ENCODE measurements at regions of chr4 and their contacts with region 1.

Region 1: GRCh38 chr4:90317785-90318184 is 190.6 kb downstream of the CCSER1 start:
- DNase-seq: peak; percentile 94
- ATAC-seq: peak; percentile 82
- H3K4me3 ChIP-seq: peak overlapping the region; percentile 31; the same call in 1 of the 2 replicates
- H3K27ac ChIP-seq: peak overlapping the region; percentile 77; the same call in 1 of the 2 replicates
- H3K4me1 ChIP-seq: peaks cover 3% of the 10 kb centered on the region
- H3K27me3 ChIP-seq: 0 out of 2 replicates have a peak, but pooled peaks cover 2% of the 10 kb centered on the region
- CTCF ChIP-seq: no peak
- POLR2A ChIP-seq: 0 out of 2 replicates have a peak, but pooled peaks have one; percentile 48
- RAD21 ChIP-seq: no peak

Region 2: GRCh38 chr4:89725268-89725667 is 592.5 kb before region 1 on chr4:
- CTCF ChIA-PET with region 1: no interaction called
- POLR2A ChIA-PET with region 1: no interaction called
- dilution Hi-C with region 1: no loop called
- in situ Hi-C with region 1: no loop called
- intact Hi-C with region 1: no loop called
- DNase-seq: peak; percentile 6
- ATAC-seq: no peak
- H3K4me3 ChIP-seq: no peak overlapping the region
- H3K27ac ChIP-seq: no peak overlapping the region
- H3K4me1 ChIP-seq: peaks cover 2% of the 10 kb centered on the region; the same call in 1 of the 2 replicates
- H3K27me3 ChIP-seq: no peaks in the 10 kb centered on the region
- CTCF ChIP-seq: no peak
- POLR2A ChIP-seq: no peak
- RAD21 ChIP-seq: no peak

Region 3: DNA sequence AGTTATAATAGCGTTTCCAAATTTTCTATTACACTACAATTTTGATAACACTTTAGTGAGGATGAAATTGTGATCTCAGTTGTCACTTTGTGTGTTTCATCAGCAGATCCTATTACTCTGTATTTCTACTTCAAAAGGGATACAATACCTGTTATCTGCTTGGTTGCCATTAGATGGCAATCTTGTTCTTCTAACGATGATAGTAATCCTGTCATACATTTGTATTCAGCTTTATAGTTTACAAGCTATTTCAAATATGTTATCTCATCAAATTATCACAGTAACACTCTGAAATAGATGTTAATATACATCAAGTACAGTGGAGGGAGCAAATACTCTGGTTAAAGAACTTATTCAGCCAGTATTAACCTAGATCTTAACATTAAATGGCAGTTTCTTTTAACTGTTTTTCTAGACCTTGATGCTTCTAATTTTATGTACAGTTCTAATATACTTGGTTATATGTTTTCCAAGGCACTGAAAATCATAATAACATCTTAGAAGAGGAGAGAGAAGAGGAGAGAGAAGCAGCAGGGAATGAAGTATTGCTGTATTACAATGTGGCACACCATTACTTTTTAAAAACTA is 101.4 kb after region 1 on chr4:
- CTCF ChIA-PET with region 1: no interaction called
- POLR2A ChIA-PET with region 1: no interaction called
- dilution Hi-C with region 1: no loop called
- in situ Hi-C with region 1: no loop called
- intact Hi-C with region 1: loop called (anchors 1 kb)
- DNase-seq: peak; percentile 37
- ATAC-seq: peak; percentile 64
- H3K4me3 ChIP-seq: no peak overlapping the region
- H3K27ac ChIP-seq: no peak overlapping the region
- H3K4me1 ChIP-seq: no peaks in the 10 kb centered on the region
- H3K27me3 ChIP-seq: no peaks in the 10 kb centered on the region
- CTCF ChIP-seq: peak; percentile 54
- POLR2A ChIP-seq: no peak
- RAD21 ChIP-seq: peak; percentile 66

Region 4: DNA sequence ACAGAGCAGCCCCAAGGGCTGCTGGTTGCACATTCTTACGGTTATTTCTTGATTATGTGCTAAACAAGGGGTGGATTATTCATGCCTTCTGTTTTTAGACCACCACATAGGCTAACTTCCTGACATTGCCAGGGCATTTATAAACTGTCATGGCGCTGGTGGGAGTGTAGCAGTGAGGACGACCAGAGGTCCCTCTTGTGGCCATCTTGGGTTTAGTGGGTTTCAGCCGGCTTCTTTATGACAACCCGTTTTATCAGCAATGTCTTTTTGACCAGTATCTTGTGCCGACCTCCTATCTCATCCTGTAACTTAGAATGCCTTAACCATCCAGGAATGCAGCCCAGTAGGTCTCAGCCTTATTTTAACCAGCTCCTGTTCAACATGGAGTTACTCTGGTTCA is 1773.5 kb after region 1 on chr4:
- CTCF ChIA-PET with region 1: no interaction called
- POLR2A ChIA-PET with region 1: no interaction called
- dilution Hi-C with region 1: no loop called
- in situ Hi-C with region 1: no loop called
- intact Hi-C with region 1: loop called (anchors 2 kb)
- DNase-seq: no peak
- ATAC-seq: peak; percentile 66
- H3K4me3 ChIP-seq: no peak overlapping the region
- H3K27ac ChIP-seq: no peak overlapping the region
- H3K4me1 ChIP-seq: no peaks in the 10 kb centered on the region
- H3K27me3 ChIP-seq: no peaks in the 10 kb centered on the region
- CTCF ChIP-seq: peak; percentile 27; the same call in 1 of the 2 replicates
- POLR2A ChIP-seq: no peak
- RAD21 ChIP-seq: no peak

Region 5: GRCh38 chr4:92234393-92235176 is 1916.8 kb after region 1 on chr4:
- CTCF ChIA-PET with region 1: no interaction called
- POLR2A ChIA-PET with region 1: no interaction called
- dilution Hi-C with region 1: no loop called
- in situ Hi-C with region 1: no loop called
- intact Hi-C with region 1: loop called (anchors 5 kb)
- DNase-seq: peak; percentile 100
- ATAC-seq: peak; percentile 88
- H3K4me3 ChIP-seq: no peak overlapping the region
- H3K27ac ChIP-seq: no peak overlapping the region
- H3K4me1 ChIP-seq: peaks cover 8% of the 10 kb centered on the region; the same call in 1 of the 2 replicates
- H3K27me3 ChIP-seq: no peaks in the 10 kb centered on the region
- CTCF ChIP-seq: no peak
- POLR2A ChIP-seq: no peak
- RAD21 ChIP-seq: no peak

Measured in IMR-90 (cell line).